ENCODE measurements at regions of chr11 and their contacts with region 1.

Region 1: DNA sequence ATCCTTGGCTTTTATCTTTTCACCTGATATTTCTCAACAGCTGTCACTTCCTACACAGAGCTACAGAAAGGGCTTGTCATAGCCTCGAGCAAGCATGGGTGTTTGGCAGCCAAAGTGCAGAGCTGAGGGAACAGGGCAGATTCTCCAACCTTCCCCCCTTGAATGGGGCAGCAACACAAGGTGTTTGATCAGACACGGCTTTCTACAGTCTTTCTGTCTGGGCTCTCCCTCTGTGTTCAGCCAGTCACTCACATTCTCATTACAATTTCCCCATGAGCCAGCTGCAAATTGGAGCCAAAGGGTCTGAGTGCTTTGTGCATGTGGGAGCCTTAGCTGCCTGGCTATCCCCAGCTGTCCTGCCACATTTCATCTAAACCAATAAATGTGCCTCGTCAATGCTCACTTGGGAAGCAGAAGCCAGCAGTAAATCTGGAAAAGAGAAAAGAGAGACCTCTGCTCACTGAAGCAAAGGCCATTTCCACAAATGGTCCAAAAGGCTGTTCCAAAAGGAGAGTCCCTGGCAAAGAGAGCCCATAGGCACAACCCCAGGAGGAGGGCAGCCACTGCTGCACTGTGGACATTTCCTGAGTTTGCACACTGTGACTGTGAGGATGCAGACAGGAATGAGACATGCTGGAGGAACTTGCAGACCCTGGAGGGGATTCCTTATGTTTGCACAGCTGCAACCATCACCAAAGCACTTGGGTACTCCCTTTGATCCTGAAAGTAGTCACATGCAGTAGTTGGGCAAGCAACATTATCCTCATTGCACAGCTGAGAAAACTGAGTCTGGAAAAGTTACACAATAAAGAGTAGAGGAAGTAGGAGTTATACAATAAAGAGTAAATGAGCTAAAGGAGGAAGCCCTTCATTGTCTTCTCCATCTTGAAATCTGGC is 186.8 kb downstream of the FAM181B start:
- DNase-seq: no peak
- ATAC-seq: no peak
- H3K4me3 Mint-ChIP-seq: no peak overlapping the region
- H3K27ac Mint-ChIP-seq: no peak overlapping the region
- H3K4me1 Mint-ChIP-seq: no peaks in the 10 kb centered on the region
- H3K27me3 Mint-ChIP-seq: peaks cover 2% of the 10 kb centered on the region

Region 2: DNA sequence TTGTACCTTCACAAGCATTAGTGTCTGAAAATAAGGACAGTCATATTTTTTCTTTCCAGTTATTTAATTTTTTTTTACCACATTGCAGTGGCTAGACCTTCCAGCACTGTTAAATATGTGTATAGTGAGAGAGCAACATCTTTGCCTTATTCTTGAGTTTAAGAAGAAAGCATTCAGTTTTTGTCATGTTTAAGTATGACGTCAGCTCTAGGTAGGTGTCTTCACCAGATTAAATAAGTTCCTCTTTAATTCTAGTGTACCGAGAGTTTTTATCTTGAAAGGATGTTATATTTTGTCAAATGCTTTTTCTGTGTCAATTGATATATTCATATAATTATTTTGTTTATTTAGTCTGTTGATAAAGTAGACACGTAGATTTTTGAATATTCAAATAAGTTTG is 72.0 kb before region 1 on chr11:
- CTCF ChIA-PET with region 1: no interaction called
- POLR2A ChIA-PET with region 1: no interaction called
- intact Hi-C with region 1: loop called in 1 of 2 experiments (anchors 10 kb)
- DNase-seq: no peak
- ATAC-seq: no peak
- H3K4me3 Mint-ChIP-seq: no peak overlapping the region
- H3K27ac Mint-ChIP-seq: no peak overlapping the region
- H3K4me1 Mint-ChIP-seq: no peaks in the 10 kb centered on the region
- H3K27me3 Mint-ChIP-seq: no peaks in the 10 kb centered on the region

Region 3: GRCh38 chr11:82523141-82523540 is 23.8 kb before region 1 on chr11:
- CTCF ChIA-PET with region 1: no interaction called
- POLR2A ChIA-PET with region 1: no interaction called
- intact Hi-C with region 1: no loop called
- DNase-seq: no peak
- ATAC-seq: no peak
- H3K4me3 Mint-ChIP-seq: no peak overlapping the region
- H3K27ac Mint-ChIP-seq: no peak overlapping the region
- H3K4me1 Mint-ChIP-seq: no peaks in the 10 kb centered on the region
- H3K27me3 Mint-ChIP-seq: peaks cover 2% of the 10 kb centered on the region